Mammary epithelial cell (primary cell): ENCODE measurements at regions of chr12 and their contacts with region 1.

Region 1: DNA sequence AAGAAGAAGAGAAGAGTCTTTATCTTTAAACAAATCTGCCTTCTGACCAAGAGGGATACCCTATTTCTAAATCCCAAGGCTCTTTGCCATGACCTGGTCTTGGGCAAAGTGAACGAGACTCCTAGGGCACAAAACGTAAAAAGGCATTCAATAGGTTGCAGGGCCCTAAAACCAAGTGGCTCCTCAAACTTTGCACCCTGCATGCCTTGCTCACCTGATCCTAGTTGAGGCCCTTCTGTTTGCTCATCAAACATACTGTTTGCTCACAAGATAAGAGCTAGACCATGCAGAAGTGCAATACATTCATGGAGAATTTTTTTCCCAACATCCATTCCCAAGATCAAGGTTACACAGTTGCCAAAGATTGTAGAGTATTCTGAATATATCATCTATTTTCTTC is 7.9 kb upstream of the PRH1 start:
- DNase-seq: no peak
- H3K4me3 ChIP-seq: no peak overlapping the region
- H3K27ac ChIP-seq: no peak overlapping the region
- H3K4me1 ChIP-seq: no peaks in the 10 kb centered on the region
- H3K27me3 ChIP-seq: no peaks in the 10 kb centered on the region
- CTCF ChIP-seq: no peak

Region 2: GRCh38 chr12:10928746-10929286 is 36.9 kb after region 1 on chr12 and contains the start of gene PRH2:
- CTCF ChIA-PET with region 1: no interaction called
- dilution Hi-C with region 1: loop called (anchors 5 kb)
- in situ Hi-C with region 1: no loop called
- intact Hi-C with region 1: no loop called
- DNase-seq: no peak
- H3K4me3 ChIP-seq: no peak within 1 kb of the TSS
- H3K27ac ChIP-seq: no peak within 1 kb of the TSS
- H3K4me1 ChIP-seq: no peaks in the 10 kb centered on the region
- H3K27me3 ChIP-seq: no peaks in the 10 kb centered on the region
- CTCF ChIP-seq: no peak
- total RNA-seq, gene PRH2: not detected

Region 3: GRCh38 chr12:12171991-12172521 is 1280.1 kb after region 1 on chr12:
- CTCF ChIA-PET with region 1: no interaction called
- dilution Hi-C with region 1: no loop called
- in situ Hi-C with region 1: no loop called
- intact Hi-C with region 1: no loop called
- DNase-seq: peak; percentile 83
- H3K4me3 ChIP-seq: no peak overlapping the region
- H3K27ac ChIP-seq: no peak overlapping the region
- H3K4me1 ChIP-seq: peaks cover 8% of the 10 kb centered on the region
- H3K27me3 ChIP-seq: no peaks in the 10 kb centered on the region
- CTCF ChIP-seq: no peak